Spleen (tissue), 13 donors: ENCODE measurements at regions of chr6 and their contacts with region 1.

Region 1: DNA sequence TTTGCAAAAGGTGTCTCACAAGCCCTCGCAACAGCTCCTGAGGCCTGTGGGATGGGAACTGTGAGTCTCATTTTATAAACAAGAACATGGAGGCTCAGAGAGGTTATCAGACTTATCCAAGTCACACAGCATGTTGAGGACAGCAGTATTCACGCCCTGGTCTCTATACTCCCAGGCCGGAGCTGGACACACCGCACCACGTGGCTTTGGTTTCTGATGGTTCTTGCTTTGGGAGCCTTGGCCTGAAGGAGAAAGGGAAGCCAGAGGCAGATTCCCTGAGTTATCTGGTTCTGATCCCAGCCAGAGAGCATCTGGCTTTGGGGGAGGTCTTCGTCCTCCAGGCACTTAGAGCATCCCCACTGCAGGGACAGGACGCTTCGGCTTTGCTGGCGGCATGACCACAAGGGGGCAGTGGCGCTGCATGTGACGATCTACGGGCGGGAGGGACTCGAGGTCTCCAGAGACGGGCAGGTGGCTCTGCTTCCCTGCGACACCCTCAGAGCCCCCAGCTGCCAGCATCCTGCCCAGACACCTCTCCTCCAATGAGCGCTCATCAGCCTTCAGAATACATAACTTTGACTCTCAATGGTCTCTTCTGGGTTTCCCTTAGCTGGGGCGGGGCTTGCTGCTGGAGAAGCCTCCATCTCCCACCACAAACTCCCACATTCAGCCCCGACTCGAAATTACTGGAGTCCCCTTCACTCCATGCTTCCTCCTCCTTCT is 51.4 kb upstream of the SAYSD1 start:
- DNase-seq: peak; percentile 96
- H3K4me3 ChIP-seq: no peak overlapping the region
- H3K27ac ChIP-seq: no peak overlapping the region
- H3K4me1 ChIP-seq: peaks cover 0 to 13% (median 5%) of the 10 kb centered on the region in 6 donors
- H3K27me3 ChIP-seq: peaks cover 0 to 19% (median 0%) of the 10 kb centered on the region in 7 donors
- CTCF ChIP-seq: peak; percentile 74 to 96 (median 89)
- POLR2A ChIP-seq: no peak

Region 2: GRCh38 chr6:38871741-38872568 is 294.4 kb before region 1 on chr6:
- intact Hi-C with region 1: loop called (anchors 10 kb)
- DNase-seq: no peak
- H3K4me3 ChIP-seq: no peak overlapping the region
- H3K27ac ChIP-seq: no peak overlapping the region
- H3K4me1 ChIP-seq: peaks cover 0 to 18% (median 5%) of the 10 kb centered on the region in 6 donors
- H3K27me3 ChIP-seq: peaks cover 0 to 3% (median 0%) of the 10 kb centered on the region in 7 donors
- CTCF ChIP-seq: peak; percentile 57 to 90 (median 78)
- POLR2A ChIP-seq: no peak

Region 3: DNA sequence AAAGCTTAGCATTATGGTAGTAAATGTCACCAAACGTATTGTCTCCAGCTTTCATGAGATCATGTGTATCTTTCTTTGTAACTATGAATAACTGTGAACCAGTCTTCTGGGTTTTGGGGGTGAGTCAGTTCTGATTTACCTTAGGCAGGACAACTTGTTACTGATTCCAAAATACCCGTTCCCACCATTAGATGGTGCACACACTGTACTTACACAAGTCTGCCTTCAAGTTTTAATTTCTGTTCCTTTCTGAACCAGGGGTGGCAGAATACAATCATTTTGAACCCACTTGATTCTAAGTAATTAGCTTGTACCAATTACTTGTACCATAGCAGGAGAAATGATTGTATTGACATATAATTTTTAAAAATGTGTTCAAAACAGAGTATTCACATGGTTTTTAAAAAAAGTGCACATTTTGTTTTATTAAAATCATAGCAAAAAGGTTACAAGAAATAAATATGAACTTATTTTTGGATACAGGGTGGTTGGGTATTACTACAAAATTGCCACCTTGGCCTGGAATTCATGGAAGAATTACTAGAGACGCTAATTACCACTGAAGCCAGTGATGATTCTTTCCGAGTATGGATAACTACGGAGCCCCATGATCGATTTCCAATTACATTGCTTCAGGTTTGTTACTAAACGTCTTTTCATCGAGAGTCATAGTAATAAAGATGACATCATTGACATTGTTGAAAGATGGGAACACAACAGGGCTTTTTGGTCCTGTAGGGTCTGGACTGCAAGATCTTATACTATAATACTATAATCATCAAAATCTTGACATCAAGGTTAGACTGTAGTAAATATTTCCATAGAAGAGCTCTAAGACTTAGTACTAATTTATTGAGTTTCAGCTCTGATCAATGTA is 192.9 kb before region 1 on chr6:
- intact Hi-C with region 1: loop called (anchors 10 kb)
- DNase-seq: no peak
- H3K4me3 ChIP-seq: no peak overlapping the region
- H3K27ac ChIP-seq: no peak overlapping the region
- H3K4me1 ChIP-seq: no peaks in the 10 kb centered on the region
- H3K27me3 ChIP-seq: peaks cover 0 to 25% (median 0%) of the 10 kb centered on the region in 7 donors
- CTCF ChIP-seq: peak in 8 of 11 experiments; percentile 21 to 52 (median 36)
- POLR2A ChIP-seq: no peak

Region 4: DNA sequence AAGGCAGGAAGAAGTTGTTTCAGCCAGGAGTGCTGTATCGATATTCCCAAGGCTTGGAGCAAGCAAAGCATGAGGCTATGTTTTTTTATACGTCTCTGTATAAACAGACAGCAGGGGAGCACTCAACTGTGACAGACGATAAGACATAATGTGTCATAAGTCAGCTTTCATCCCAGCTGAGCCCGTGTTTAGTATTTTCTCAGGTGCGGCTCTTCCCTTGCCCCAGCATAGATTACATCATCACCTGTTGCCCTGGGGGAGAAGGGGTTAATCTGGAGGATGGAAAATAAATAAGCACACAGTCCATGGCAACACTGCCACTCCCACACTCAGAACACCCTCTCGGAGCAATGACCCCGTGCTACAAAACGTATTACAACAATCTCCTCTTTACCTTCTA is 85.1 kb after region 1 on chr6:
- intact Hi-C with region 1: no loop called
- DNase-seq: peak; percentile 15
- H3K4me3 ChIP-seq: no peak overlapping the region
- H3K27ac ChIP-seq: no peak overlapping the region
- H3K4me1 ChIP-seq: no peaks in the 10 kb centered on the region
- H3K27me3 ChIP-seq: peaks cover 0 to 3% (median 0%) of the 10 kb centered on the region in 7 donors
- CTCF ChIP-seq: no peak
- POLR2A ChIP-seq: no peak